ENCODE measurements at regions of chr3 and their contacts with region 1.

Region 1: GRCh38 chr3:36575241-36575640 is 189.1 kb downstream of the DCLK3 start:
- DNase-seq: no peak

Region 2: DNA sequence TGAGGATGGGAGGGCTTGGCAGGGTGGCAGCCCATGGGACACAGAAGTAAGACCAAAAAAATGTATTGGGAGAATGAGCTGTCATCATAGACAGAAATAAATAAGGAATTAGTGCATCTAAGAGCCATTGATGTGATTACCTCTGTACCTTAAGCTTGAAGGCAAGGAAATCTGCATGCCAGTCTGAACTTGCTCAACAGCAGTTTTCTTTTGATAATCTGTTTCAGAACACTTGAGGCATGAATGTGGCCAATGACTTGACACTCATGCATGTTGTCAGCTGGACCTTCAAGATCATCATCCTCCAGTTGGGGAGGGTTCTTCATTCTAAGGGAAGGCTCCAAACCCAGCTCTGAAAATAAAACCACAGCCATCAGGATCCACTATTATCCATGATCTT is 40.6 kb after region 1 on chr3:
- intact Hi-C with region 1: loop called in 1 of 2 experiments (anchors 1 kb)
- DNase-seq: no peak

Region 3: GRCh38 chr3:37096288-37096687 is 521.0 kb after region 1 on chr3:
- intact Hi-C with region 1: no loop called
- DNase-seq: no peak

Measured in posterior vena cava (tissue), 2 donors.